Left cardiac atrium (tissue), 4 donors: ENCODE measurements at regions of chr9 and their contacts with region 1.

Region 1: GRCh38 chr9:84397151-84397728 is 56.7 kb upstream of the SLC28A3 start:
- DNase-seq: peak; percentile 48
- ATAC-seq: peak; percentile 80 to 83

Region 2: GRCh38 chr9:84339962-84340361 is 57.3 kb before region 1 on chr9:
- intact Hi-C with region 1: no loop called
- DNase-seq: peak; percentile 45
- ATAC-seq: peak; percentile 86 to 89

Region 3: DNA sequence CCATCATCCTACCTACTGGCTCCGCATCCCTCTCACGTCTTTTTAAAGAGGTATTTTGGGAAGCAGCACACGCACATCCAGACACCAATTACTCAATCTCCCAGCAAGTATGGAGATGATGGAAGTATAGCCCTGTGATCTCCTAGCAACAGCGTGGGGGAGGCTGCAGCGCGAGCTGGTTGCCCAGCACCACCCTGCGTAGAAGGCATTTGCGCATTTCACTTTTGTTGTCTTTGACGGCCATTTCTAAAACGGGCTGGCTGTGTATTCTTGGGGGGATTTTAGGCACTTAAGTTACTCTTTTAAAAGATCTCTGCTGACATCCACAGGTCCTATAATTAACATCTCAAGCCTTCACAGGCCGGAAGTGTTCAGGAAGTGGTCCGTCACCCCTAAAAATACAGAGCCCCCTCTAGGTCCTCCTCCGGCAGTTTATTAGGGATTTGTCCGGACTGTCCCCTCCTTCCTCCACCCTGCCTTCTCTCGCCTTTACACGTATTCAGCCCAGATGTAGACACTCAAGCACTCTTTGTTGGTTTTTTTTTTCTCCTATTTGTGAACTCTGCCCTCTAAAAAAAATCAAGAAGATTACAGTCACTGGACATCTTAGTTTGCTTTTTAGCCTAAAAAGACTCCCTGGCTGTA is 643.7 kb after region 1 on chr9:
- intact Hi-C with region 1: no loop called
- DNase-seq: peak; percentile 41
- ATAC-seq: peak; percentile 62 to 94

Region 4: DNA sequence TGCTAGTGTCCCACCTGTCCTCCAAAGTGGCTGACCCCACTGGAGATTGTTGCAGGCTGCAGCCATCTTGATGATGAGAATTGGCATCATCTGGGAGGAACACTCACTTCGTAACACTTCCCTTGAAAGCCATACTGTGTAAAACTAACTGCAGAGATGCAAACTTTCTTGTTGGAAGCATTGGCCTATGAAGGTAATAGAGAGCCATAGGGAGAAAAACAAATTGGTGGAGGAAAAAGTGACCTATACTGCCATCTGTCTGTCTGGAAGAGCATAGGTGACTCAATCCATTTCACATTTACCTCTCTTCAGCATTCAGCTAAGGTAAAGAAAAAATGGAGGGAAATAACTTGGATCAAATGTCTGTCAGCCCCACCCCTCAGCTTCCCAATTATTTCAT is 745.7 kb after region 1 on chr9:
- intact Hi-C with region 1: loop called in 1 of 2 experiments (anchors 5 kb)
- DNase-seq: no peak
- ATAC-seq: peak in 1 of 2 donors; percentile 34

Region 5: DNA sequence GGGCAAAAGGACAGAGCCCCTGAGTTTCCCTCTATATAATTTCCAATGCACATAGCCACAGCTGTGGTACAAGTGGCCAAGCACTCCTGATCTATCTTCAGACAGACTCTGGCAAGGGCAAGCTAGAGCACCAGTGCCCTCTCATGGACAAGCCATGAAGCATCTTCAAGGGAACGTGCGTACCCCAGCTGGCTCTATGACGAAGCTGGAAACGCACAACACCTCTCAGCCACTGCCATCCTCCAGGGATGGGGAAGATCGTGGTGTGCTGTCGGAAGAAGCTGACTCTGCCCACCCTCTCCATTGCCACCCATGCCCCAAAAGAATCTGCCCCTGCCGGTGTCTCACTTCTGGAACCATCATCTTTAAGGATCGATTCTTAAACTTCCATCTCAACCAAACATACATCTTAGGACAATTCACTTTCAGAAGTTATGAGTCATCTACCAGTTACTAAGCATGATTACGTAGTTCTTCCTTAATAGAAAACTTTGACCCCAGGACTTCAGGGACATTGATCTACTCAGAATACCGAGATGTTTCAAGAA is 861.7 kb after region 1 on chr9:
- intact Hi-C with region 1: loop called in 1 of 2 experiments (anchors 2 kb)
- DNase-seq: peak; percentile 64
- ATAC-seq: peak; percentile 96

Region 6: GRCh38 chr9:85605905-85606304 is 1208.7 kb after region 1 on chr9:
- intact Hi-C with region 1: loop called in 1 of 2 experiments (anchors 5 kb)
- DNase-seq: no peak
- ATAC-seq: no peak